CD8-positive, alpha-beta T cell (primary cell): ENCODE measurements at regions of chr2 and their contacts with region 1.

Region 1: GRCh38 chr2:98757904-98758421 is 27.0 kb upstream of the MGAT4A start:
- DNase-seq: peak in 8 of 9 experiments; percentile 22 to 87 (median 70)
- ATAC-seq: peak; percentile 69
- H3K4me3 ChIP-seq: peak overlapping the region; percentile 14 to 32
- H3K4me3 Mint-ChIP-seq: peak overlapping the region; percentile 77
- H3K27ac ChIP-seq: peak overlapping the region; percentile 37 to 66
- H3K27ac Mint-ChIP-seq: peak overlapping the region; percentile 97
- H3K4me1 ChIP-seq: peaks cover 50% of the 10 kb centered on the region
- H3K4me1 Mint-ChIP-seq: peaks cover 58% of the 10 kb centered on the region
- H3K27me3 ChIP-seq: no peaks in the 10 kb centered on the region
- H3K27me3 Mint-ChIP-seq: no peaks in the 10 kb centered on the region
- CTCF ChIP-seq: no peak

Region 2: DNA sequence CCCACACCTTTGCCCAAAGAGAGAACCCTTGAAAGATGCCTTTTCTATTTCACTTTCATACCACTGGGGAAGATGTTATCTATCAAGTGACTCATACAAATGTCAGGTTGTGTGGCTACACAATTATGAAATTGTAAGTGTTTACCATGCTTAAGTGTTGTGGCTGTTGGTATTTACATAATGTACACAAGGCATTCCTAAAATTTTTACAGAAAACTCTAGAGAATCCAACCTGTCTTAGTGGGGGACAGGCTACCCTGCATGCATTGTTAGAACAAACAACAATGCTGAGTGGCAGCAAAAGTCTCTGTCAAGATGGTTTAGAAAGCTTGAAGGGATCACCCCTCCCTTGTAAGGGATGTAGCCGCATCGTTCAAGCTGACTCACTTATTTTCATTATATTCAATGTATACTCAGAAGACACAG is 21.5 kb before region 1 on chr2:
- CTCF ChIA-PET with region 1: interaction called, 6 read pairs
- POLR2A ChIA-PET with region 1: interaction called, 31 read pairs
- intact Hi-C with region 1: loop called (anchors 2 kb)
- DNase-seq: peak in 2 of 9 experiments; percentile 32 to 49
- ATAC-seq: peak; percentile 58
- H3K4me3 ChIP-seq: no peak overlapping the region
- H3K4me3 Mint-ChIP-seq: peak overlapping the region; percentile 22
- H3K27ac ChIP-seq: peak overlapping the region in 1 of 2 experiments; percentile 39
- H3K27ac Mint-ChIP-seq: peak overlapping the region; percentile 82
- H3K4me1 ChIP-seq: peaks cover 63% of the 10 kb centered on the region
- H3K4me1 Mint-ChIP-seq: peaks cover 76% of the 10 kb centered on the region
- H3K27me3 ChIP-seq: no peaks in the 10 kb centered on the region
- H3K27me3 Mint-ChIP-seq: no peaks in the 10 kb centered on the region
- CTCF ChIP-seq: no peak

Region 3: DNA sequence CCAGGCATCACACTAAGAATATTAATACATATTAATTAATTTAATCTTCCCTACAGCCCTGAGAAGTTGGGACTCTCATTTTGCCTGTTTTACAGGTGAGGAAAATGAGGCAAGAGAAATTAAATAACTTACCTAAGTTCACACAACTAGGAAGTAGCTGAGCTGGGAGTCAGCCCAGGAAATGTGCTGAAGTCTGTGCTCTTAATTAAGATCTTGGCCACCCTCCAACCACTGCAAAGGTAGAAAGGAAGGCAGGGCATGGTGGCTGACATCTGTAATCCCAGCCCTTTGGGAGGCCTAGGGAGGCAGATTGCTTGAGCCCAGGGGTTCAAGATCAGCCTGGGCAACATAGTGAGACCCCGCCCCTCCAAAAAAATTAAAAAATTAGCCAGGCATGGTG is 14.1 kb before region 1 on chr2:
- CTCF ChIA-PET with region 1: interaction called, 6 read pairs
- POLR2A ChIA-PET with region 1: interaction called, 13 read pairs
- intact Hi-C with region 1: no loop called
- DNase-seq: no peak
- ATAC-seq: peak; percentile 34
- H3K4me3 ChIP-seq: no peak overlapping the region
- H3K4me3 Mint-ChIP-seq: no peak overlapping the region
- H3K27ac ChIP-seq: no peak overlapping the region
- H3K27ac Mint-ChIP-seq: peak overlapping the region; percentile 41
- H3K4me1 ChIP-seq: peaks cover 39% of the 10 kb centered on the region
- H3K4me1 Mint-ChIP-seq: peaks cover 61% of the 10 kb centered on the region
- H3K27me3 ChIP-seq: no peaks in the 10 kb centered on the region
- H3K27me3 Mint-ChIP-seq: no peaks in the 10 kb centered on the region
- CTCF ChIP-seq: no peak